ENCODE measurements at regions of chr19 and their contacts with region 1.

Region 1: GRCh38 chr19:10864538-10864899 is 6.8 kb upstream of the CARM1 start:
- DNase-seq: peak; percentile 87
- ATAC-seq: peak; percentile 90
- H3K4me3 Mint-ChIP-seq: no peak overlapping the region
- H3K27ac Mint-ChIP-seq: no peak overlapping the region
- H3K4me1 Mint-ChIP-seq: peaks cover 21% of the 10 kb centered on the region
- H3K27me3 Mint-ChIP-seq: no peaks in the 10 kb centered on the region

Region 2: DNA sequence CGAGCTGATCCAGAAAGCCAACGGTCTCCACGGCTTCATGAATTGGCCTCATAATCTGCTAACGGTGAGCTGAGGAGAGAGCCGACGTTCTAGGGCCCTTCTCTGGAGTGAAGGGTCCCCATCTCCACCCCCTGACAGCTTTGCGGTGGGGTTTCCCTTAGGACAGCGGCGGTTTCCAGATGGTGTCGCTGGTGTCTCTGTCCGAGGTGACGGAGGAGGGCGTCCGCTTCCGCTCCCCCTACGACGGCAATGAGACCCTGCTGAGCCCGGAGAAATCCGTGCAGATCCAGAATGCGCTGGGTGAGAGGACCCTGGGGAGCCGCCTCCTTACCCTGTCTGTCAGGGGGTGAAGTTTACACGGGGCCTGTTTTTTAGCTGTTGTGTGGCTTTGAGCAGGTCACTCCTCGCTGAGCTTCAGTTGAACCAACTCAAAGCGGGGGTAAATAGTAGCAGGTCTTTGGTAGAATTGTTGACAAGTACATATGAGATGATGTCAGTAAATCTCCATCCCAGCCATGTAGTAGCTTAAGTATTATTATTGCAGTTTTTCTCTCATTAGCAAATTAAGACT is 162.5 kb before region 1 on chr19:
- CTCF ChIA-PET with region 1: interaction called, 20 read pairs
- POLR2A ChIA-PET with region 1: no interaction called
- DNase-seq: peak; percentile 47
- ATAC-seq: peak; percentile 34
- H3K4me3 Mint-ChIP-seq: peak overlapping the region; percentile 80
- H3K27ac Mint-ChIP-seq: peak overlapping the region; percentile 74
- H3K4me1 Mint-ChIP-seq: peaks cover 12% of the 10 kb centered on the region
- H3K27me3 Mint-ChIP-seq: peaks cover 5% of the 10 kb centered on the region

Region 3: DNA sequence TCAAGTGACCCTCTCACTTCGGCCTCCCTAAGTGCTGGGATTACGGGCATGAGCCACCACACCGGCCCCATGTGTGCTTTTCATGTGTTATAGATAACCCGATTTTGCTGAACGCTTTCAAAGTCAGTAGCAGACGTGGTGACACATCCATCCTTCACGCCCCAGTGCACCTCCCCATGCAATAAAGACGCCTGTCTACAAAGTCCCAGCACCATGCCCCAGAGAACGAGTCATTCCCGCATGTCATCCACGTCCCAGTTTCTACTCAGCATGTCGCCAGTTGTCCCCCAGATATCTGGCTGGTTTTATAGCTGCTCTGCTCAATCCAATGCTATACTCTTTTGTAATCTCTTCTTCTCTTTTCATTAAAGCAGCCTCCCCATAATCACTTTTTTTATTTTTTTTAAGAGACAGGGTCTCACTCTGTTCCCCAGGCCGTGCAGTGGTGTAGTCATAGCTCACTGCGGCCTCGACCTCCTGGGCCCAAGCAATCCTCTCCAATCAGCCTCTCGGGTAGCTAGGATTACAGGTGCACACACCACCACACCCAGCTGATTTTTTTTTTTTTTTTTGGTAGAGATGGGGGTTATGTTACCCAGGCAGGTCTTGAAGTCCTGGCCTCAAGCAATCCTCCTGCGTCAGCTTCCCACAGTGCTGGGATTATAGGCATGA is 104.1 kb before region 1 on chr19:
- CTCF ChIA-PET with region 1: interaction called, 18 read pairs
- POLR2A ChIA-PET with region 1: no interaction called
- DNase-seq: peak; percentile 32
- ATAC-seq: no peak
- H3K4me3 Mint-ChIP-seq: peak overlapping the region; percentile 65
- H3K27ac Mint-ChIP-seq: peak overlapping the region; percentile 90
- H3K4me1 Mint-ChIP-seq: peaks cover 89% of the 10 kb centered on the region
- H3K27me3 Mint-ChIP-seq: no peaks in the 10 kb centered on the region

Region 4: GRCh38 chr19:10796653-10797052 is 67.9 kb before region 1 on chr19:
- CTCF ChIA-PET with region 1: no interaction called
- POLR2A ChIA-PET with region 1: no interaction called
- DNase-seq: no peak
- ATAC-seq: no peak
- H3K4me3 Mint-ChIP-seq: no peak overlapping the region
- H3K27ac Mint-ChIP-seq: no peak overlapping the region
- H3K4me1 Mint-ChIP-seq: peaks cover 31% of the 10 kb centered on the region
- H3K27me3 Mint-ChIP-seq: no peaks in the 10 kb centered on the region

Region 5: DNA sequence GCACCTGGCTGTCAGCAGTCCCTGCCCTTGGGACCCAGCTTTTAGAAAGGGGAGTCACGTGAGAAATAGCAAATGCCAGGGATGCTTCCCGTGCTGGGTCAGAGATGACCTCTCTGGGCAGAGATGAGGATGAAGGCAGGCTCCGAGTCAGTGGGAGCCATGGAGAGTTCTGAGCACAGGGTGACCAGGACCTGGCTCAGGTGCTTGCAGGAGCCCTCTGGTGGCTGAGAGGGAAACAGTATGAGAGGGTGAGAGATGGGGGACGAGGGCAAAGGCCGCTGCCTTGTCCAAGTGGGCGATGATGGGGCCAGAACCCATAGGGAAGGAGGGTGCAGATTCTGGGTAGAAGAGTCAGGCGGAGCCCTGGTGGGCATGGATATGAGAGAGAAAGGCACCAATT is 44.3 kb before region 1 on chr19:
- CTCF ChIA-PET with region 1: interaction called, 14 read pairs
- POLR2A ChIA-PET with region 1: interaction called, 3 read pairs
- DNase-seq: no peak
- ATAC-seq: no peak
- H3K4me3 Mint-ChIP-seq: no peak overlapping the region
- H3K27ac Mint-ChIP-seq: peak overlapping the region; percentile 46
- H3K4me1 Mint-ChIP-seq: peaks cover 29% of the 10 kb centered on the region
- H3K27me3 Mint-ChIP-seq: no peaks in the 10 kb centered on the region

Region 6: DNA sequence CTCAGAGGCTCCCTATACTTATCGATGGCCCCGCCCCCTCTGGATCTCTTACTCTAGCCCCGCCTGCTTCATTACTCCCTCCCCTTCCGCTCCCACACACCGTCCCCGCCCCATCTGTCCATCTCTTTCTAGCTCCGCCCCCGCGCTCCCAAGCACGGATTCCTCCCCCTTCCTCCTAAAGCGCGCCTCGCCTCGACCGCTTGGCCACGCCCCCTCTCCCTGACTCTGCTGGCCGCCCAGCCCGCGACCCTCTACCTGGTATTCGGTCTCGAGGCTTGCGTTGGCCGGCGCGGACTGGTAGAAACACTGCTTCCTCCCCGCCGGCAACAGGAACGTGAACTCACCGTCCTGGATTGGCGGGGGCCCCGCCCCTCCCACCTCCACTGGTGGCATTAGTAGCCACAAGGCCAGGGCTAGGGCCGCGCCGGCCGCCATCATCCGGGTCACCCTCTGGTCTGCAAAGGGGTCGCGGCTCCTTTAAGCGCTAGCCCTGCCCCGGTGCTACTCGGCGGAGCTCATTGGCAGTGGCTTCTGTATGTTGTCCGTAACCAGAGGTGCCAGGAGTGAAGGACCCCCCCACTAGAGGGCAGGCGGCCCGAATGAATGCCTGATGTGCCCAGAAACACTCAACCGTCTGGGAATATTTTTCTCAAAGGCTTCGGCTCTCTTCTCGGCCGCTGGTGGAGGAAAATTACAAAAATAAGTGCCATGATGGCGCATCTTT is 28.6 kb before region 1 on chr19 and contains the start of gene TMED1:
- CTCF ChIA-PET with region 1: interaction called, 37 read pairs
- POLR2A ChIA-PET with region 1: interaction called, 12 read pairs
- DNase-seq: peak; percentile 98
- ATAC-seq: peak; percentile 91
- H3K4me3 Mint-ChIP-seq: peak within 1 kb of the TSS; percentile 89
- H3K27ac Mint-ChIP-seq: peak within 1 kb of the TSS; percentile 99
- H3K4me1 Mint-ChIP-seq: peaks cover 17% of the 10 kb centered on the region
- H3K27me3 Mint-ChIP-seq: no peaks in the 10 kb centered on the region
- total RNA-seq, gene TMED1: 9.3 to 11.2 TPM

Region 7: DNA sequence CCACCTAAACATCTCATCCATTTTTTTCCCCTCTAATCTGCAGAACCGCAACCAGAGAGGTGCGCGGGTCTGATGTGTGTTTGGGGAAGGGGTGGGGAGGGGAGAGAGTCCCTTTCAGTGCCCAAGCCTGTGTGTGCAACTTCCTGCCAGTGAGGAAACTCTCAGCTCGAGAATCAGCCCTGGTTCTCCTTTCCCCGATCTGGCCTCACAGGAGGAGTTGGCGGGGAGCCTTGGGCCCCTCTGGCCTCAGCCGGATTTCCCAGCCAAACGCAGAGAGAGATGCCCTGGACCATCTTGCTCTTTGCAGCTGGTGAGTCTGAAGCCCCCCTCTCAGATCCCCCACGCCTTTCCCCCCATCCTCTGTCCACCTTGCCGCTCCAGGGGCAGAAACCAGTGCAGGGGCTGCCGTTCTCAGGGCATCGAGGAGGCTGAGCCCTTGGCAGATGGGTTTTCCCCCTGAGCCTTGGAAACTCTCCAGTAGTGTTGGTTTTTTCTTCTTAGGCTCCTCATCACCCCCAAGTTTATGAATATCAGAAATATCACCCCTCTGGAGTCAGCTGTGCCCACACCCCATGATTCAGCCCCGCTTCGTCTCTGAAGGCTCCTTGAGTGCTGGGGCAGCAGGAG is 16.2 kb before region 1 on chr19 and contains the start of gene C19orf38:
- CTCF ChIA-PET with region 1: interaction called, 60 read pairs
- POLR2A ChIA-PET with region 1: interaction called, 3 read pairs
- DNase-seq: peak; percentile 27
- ATAC-seq: peak; percentile 48
- H3K4me3 Mint-ChIP-seq: peak within 1 kb of the TSS; percentile 35
- H3K27ac Mint-ChIP-seq: peak within 1 kb of the TSS; percentile 57
- H3K4me1 Mint-ChIP-seq: peaks cover 23% of the 10 kb centered on the region
- H3K27me3 Mint-ChIP-seq: peaks cover 3% of the 10 kb centered on the region
- total RNA-seq, gene C19orf38: 1.1 to 2.2 TPM

Measured in activated CD8-positive, alpha-beta T cell treated with anti-CD3 and anti-CD28 coated beads, Interleukin-2, amount 10 ng/mL, durations not matched to agents 7 days and 5 days (primary cell).